Dendritic cell treated with granulocyte-macrophage colony-stimulating factor and Interleukin-4, amounts not matched to agents 40 ng/mL and 50 ng/mL, for 4 days (primary cell): ENCODE measurements at regions of chr9 and their contacts with region 1.

Region 1: GRCh38 chr9:22008736-22009562 is at the start of gene CDKN2B:
- H3K4me3 Mint-ChIP-seq: peak within 1 kb of the TSS; percentile 93
- H3K27ac Mint-ChIP-seq: peak within 1 kb of the TSS; percentile 81
- H3K4me1 Mint-ChIP-seq: peaks cover 40% of the 10 kb centered on the region
- H3K27me3 Mint-ChIP-seq: peaks cover 65% of the 10 kb centered on the region

Region 2: DNA sequence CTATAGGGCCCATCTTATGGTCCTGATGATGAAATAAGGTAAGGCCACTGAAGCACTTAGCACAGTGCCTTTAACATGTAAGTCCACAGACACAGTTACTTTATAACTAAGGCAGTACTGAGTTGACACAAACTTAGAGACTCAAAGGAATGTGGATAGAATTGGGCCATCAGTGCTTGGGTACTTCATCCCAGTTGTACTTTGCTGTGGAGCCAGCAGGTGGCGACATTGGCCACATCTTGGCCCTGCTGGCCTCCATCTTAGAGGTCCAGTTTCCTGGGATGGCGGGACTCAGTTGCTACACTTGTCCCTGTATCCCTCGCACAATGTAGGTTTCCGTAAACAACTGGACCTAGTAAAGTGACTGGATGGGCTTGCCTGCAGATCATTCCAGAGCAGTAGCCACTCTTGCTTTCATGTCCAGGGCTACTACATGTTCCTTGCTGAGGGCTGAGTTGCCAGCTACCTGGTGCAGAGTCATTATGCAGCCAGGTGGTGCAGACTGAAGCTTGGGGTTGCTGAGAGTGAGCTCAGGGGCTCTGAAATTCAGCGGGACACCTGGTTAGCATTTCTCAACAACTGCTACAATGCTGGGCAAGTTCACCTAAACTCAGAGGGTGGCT is 195.9 kb before region 1 on chr9:
- intact Hi-C with region 1: loop called (anchors 2 kb)
- H3K4me3 Mint-ChIP-seq: no peak overlapping the region
- H3K27ac Mint-ChIP-seq: no peak overlapping the region
- H3K4me1 Mint-ChIP-seq: peaks cover 19% of the 10 kb centered on the region
- H3K27me3 Mint-ChIP-seq: no peaks in the 10 kb centered on the region

Region 3: DNA sequence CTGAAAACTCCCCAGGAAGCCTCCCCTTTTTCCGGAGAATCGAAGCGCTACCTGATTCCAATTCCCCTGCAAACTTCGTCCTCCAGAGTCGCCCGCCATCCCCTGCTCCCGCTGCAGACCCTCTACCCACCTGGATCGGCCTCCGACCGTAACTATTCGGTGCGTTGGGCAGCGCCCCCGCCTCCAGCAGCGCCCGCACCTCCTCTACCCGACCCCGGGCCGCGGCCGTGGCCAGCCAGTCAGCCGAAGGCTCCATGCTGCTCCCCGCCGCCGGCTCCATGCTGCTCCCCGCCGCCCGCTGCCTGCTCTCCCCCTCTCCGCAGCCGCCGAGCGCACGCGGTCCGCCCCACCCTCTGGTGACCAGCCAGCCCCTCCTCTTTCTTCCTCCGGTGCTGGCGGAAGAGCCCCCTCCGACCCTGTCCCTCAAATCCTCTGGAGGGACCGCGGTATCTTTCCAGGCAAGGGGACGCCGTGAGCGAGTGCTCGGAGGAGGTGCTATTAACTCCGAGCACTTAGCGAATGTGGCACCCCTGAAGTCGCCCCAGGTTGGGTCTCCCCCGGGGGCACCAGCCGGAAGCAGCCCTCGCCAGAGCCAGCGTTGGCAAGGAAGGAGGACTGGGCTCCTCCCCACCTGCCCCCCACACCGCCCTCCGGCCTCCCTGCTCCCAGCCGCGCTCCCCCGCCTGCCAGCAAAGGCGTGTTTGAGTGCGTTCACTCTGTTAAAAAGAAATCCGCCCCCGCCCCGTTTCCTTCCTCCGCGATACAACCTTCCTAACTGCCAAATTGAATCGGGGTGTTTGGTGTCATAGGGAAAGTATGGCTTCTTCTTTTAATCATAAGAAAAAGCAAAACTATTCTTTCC is 34.2 kb before region 1 on chr9:
- intact Hi-C with region 1: loop called (anchors 5 kb)
- H3K4me3 Mint-ChIP-seq: peak overlapping the region; percentile 76
- H3K27ac Mint-ChIP-seq: peak overlapping the region; percentile 45
- H3K4me1 Mint-ChIP-seq: peaks cover 61% of the 10 kb centered on the region
- H3K27me3 Mint-ChIP-seq: peaks cover 88% of the 10 kb centered on the region

Region 4: GRCh38 chr9:21995177-21996086 is 13.5 kb before region 1 on chr9:
- intact Hi-C with region 1: loop called (anchors 1 kb)
- H3K4me3 Mint-ChIP-seq: peak overlapping the region; percentile 94
- H3K27ac Mint-ChIP-seq: peak overlapping the region; percentile 97
- H3K4me1 Mint-ChIP-seq: peaks cover 18% of the 10 kb centered on the region
- H3K27me3 Mint-ChIP-seq: peaks cover 53% of the 10 kb centered on the region

Region 5: GRCh38 chr9:22169727-22170503 is 161.0 kb after region 1 on chr9:
- intact Hi-C with region 1: loop called (anchors 10 kb)
- H3K4me3 Mint-ChIP-seq: no peak overlapping the region
- H3K27ac Mint-ChIP-seq: peak overlapping the region; percentile 35
- H3K4me1 Mint-ChIP-seq: peaks cover 34% of the 10 kb centered on the region
- H3K27me3 Mint-ChIP-seq: peaks cover 11% of the 10 kb centered on the region

Region 6: GRCh38 chr9:22211593-22212360 is 202.8 kb after region 1 on chr9:
- intact Hi-C with region 1: no loop called
- H3K4me3 Mint-ChIP-seq: no peak overlapping the region
- H3K27ac Mint-ChIP-seq: no peak overlapping the region
- H3K4me1 Mint-ChIP-seq: peaks cover 21% of the 10 kb centered on the region
- H3K27me3 Mint-ChIP-seq: peaks cover 21% of the 10 kb centered on the region

Region 7: DNA sequence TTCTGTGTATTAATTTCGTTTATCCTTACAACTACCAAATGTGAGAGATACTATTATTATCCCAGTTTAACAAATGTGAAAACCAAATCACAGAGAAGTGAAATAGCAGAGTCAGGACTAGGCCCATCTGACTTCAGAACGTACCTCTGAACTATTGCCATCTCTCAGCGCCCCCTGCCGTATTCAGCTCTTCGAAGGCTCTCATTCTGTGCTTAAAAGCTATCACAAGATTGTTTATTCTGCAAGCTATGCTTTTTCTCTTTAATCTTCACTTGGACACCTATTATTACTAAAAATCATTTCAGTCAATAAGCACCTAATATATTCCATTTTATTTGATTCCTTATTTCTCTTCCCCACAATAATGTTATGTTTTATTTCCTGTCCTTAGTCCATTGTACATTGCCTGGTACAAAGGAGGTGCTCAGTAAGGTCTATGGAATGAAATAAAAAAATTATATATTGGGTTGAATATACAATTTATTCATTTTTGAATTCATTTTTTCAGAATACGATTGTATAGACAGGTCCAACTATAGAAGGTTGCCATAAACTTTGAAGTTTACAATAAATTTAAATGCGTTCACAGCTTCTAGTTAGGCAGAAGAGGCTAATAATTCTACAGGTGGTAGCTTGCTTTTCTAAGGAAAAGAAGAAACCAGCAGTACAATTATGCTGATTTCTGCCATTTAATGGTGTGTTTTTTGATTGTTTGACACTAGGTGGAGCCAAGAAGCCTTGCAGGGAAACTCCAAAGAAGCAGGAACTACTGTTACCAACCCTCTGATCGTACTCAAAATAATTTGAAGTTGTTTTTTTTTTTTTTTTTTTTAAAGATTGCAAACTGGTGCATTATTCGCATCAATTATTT is 235.4 kb after region 1 on chr9:
- intact Hi-C with region 1: loop called (anchors 10 kb)
- H3K4me3 Mint-ChIP-seq: no peak overlapping the region
- H3K27ac Mint-ChIP-seq: no peak overlapping the region
- H3K4me1 Mint-ChIP-seq: peaks cover 23% of the 10 kb centered on the region
- H3K27me3 Mint-ChIP-seq: peaks cover 25% of the 10 kb centered on the region